Common myeloid progenitor, CD34-positive (primary cell): ENCODE measurements at regions of chr14 and their contacts with region 1.

Region 1: DNA sequence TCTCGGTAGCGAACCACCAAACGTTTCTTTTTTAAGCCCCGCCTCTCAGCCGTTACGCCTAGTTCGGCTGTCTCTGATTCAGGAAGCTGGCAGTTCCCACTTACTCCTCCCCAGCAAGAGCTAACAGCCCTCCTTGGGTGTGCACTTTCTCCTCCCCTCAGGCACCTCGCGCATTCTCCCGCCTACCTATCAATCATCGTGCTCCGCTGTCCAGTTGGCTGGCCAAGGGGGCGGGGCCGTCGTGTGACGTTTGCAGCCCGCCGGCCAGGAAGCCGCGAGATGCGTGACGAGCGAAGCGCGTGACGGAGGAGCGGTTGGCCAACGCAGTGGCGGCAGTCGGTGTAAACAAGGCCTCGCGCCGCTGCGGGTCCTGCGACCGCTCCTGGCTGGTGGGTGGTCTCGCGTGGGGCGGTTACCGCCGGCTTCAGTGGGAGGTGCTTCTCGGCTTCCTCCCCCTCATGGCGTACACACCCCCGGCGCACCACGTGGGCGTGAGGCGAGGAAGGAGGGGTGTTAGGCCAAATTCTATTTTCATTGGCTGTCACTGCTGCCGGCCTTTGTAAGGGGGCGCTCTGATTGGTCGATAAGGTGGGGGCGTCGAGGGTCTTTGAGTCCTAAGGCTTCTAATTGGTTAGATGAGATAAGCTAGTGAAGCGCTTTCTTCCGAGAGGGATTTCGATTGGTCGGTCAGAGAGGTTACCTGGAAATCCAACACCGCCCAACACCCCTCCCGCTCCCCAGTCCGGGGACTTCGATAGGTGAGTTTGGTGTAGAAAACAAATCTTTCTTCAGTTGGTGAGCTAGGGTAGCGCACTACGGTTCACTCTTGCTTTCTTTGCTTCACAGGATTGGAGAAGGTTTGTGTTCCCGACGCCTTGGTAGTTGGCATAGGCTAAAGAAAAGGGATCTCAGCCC is at the starts of genes DCAF11 and NRL:
- DNase-seq: peak; percentile 100
- H3K4me3 ChIP-seq: peak within 1 kb of the TSS; percentile 51 to 98 (median 91)
- H3K27ac ChIP-seq: peak within 1 kb of the TSS; percentile 95 to 98
- H3K4me1 ChIP-seq: peaks cover 8 to 33% (median 19%) of the 10 kb centered on the region in 4 experiments
- H3K27me3 ChIP-seq: no peaks in the 10 kb centered on the region

Region 2: GRCh38 chr14:24127673-24128072 is 12.9 kb after region 1 on chr14:
- CTCF ChIA-PET with region 1: interaction called, 46 read pairs
- POLR2A ChIA-PET with region 1: interaction called, 7 read pairs
- DNase-seq: no peak
- H3K4me3 ChIP-seq: no peak overlapping the region
- H3K27ac ChIP-seq: no peak overlapping the region
- H3K4me1 ChIP-seq: peaks cover 0 to 16% (median 10%) of the 10 kb centered on the region in 4 experiments
- H3K27me3 ChIP-seq: no peaks in the 10 kb centered on the region

Region 3: GRCh38 chr14:24135834-24136542 is 21.2 kb after region 1 on chr14 and contains the start of gene PSME1:
- CTCF ChIA-PET with region 1: interaction called, 46 read pairs
- POLR2A ChIA-PET with region 1: interaction called, 10 read pairs
- DNase-seq: peak; percentile 88 to 95 (median 94)
- H3K4me3 ChIP-seq: peak within 1 kb of the TSS; percentile 71 to 96 (median 87)
- H3K27ac ChIP-seq: peak within 1 kb of the TSS; percentile 58 to 83
- H3K4me1 ChIP-seq: peaks cover 2 to 56% (median 36%) of the 10 kb centered on the region in 4 experiments
- H3K27me3 ChIP-seq: no peaks in the 10 kb centered on the region

Region 4: GRCh38 chr14:24259252-24259995 is 144.6 kb after region 1 on chr14:
- CTCF ChIA-PET with region 1: no interaction called
- POLR2A ChIA-PET with region 1: no interaction called
- DNase-seq: no peak
- H3K4me3 ChIP-seq: no peak overlapping the region
- H3K27ac ChIP-seq: no peak overlapping the region
- H3K4me1 ChIP-seq: no peaks in the 10 kb centered on the region
- H3K27me3 ChIP-seq: no peaks in the 10 kb centered on the region